B cell (primary cell): ENCODE measurements at regions of chr16 and their contacts with region 1.

Region 1: DNA sequence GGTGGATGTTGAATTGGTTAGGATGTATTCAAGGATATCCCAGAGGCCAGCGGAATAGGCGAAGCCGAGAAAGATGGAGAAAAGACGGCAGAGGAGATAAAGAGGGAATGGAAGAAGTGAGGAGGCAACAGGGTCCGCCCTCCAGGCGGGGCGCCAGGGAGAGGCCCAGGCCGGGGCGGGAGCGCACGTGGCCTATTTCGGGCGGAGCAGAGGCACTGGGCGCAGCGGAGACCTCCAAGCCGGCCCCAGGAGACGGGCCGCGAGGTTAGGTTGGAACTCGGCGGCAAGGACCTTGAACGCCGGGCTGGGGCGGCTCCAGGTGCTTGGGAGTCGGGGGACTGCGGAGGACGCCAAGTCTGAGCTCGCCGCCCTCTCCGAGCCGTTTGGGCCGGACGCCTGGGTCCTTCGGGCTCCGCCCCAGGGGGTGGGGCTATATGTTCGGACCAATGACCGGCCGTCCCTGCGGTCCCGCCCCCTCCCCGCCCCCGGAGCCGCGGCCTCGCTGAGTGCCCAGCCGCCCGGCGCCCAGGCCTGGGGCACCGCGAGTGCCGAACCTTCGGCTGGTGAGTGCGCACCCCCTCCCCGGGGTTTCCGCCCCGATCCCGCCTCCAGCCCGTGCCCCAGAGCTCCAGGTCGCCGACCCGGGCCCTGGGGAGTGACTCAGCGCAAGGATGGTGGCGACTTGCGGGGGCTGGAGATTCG is at the start of gene ZNF771:
- DNase-seq: peak; percentile 94
- ATAC-seq: peak; percentile 91
- H3K4me3 ChIP-seq: peak within 1 kb of the TSS; percentile 42 to 76 (median 66)
- H3K4me3 Mint-ChIP-seq: peak within 1 kb of the TSS; percentile 98
- H3K27ac ChIP-seq: peak within 1 kb of the TSS; percentile 42 to 57
- H3K27ac Mint-ChIP-seq: peak within 1 kb of the TSS; percentile 96
- H3K4me1 ChIP-seq: peaks cover 15 to 23% of the 10 kb centered on the region in 2 donors
- H3K4me1 Mint-ChIP-seq: peaks cover 21% of the 10 kb centered on the region
- H3K27me3 ChIP-seq: no peaks in the 10 kb centered on the region
- H3K27me3 Mint-ChIP-seq: peaks cover 3% of the 10 kb centered on the region
- CTCF ChIP-seq: no peak
- total RNA-seq, gene ZNF771: 6.6 and 8.3 TPM in 2 replicates

Region 2: DNA sequence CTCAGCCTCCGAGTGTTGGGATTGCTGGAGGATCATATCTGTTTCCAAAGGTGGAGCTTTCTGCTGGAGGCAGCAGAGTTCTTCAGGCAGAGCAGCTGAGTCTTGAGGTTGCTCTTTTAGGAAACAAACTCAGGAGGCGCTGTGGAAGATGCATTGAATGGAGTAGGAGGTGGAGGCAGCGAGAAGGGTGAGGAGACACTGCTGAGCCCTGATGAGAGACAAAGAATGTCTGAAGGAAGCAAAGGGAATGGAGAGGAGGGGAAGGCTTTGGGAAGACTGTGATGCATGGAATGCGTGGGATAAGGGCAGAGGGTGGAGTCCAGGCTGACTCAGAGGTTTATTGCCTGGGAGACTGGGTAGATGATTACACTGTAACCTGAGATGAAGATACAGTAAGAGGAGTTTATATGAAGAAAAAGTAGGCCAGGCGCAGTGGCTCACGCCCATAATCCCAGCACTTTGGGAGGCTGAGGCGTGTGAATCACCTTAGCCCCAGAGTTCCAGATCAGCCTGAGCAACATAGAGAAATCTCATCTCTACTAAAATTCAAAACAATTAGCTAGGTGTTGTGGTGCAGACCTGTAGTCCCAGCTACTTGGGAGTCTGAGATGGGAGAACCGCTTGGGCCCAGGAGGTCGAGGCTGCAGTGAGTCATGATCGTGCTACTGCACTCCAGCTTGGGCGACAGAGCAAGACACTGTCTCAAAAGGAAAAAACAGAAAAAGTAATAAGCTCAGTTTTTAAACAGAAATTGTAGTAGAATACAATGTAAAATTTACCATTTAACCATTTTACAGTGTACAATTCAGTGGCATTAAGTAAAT is 463.2 kb before region 1 on chr16:
- CTCF ChIA-PET with region 1: no interaction called
- POLR2A ChIA-PET with region 1: no interaction called
- intact Hi-C with region 1: no loop called
- DNase-seq: no peak
- ATAC-seq: no peak
- H3K4me3 ChIP-seq: no peak overlapping the region
- H3K4me3 Mint-ChIP-seq: no peak overlapping the region
- H3K27ac ChIP-seq: no peak overlapping the region
- H3K27ac Mint-ChIP-seq: no peak overlapping the region
- H3K4me1 ChIP-seq: no peaks in the 10 kb centered on the region
- H3K4me1 Mint-ChIP-seq: no peaks in the 10 kb centered on the region
- H3K27me3 ChIP-seq: peaks cover 0 to 18% (median 6%) of the 10 kb centered on the region in 4 experiments
- H3K27me3 Mint-ChIP-seq: peaks cover 15% of the 10 kb centered on the region
- CTCF ChIP-seq: no peak

Region 3: GRCh38 chr16:30335598-30336474 is 71.4 kb before region 1 on chr16:
- CTCF ChIA-PET with region 1: no interaction called
- POLR2A ChIA-PET with region 1: interaction called, 4 read pairs
- intact Hi-C with region 1: loop called (anchors 1 kb)
- DNase-seq: peak; percentile 80
- ATAC-seq: no peak
- H3K4me3 ChIP-seq: peak overlapping the region in 4 of 5 experiments; percentile 62 to 73 (median 68)
- H3K4me3 Mint-ChIP-seq: peak overlapping the region; percentile 85
- H3K27ac ChIP-seq: peak overlapping the region; percentile 59 to 76
- H3K27ac Mint-ChIP-seq: peak overlapping the region; percentile 91
- H3K4me1 ChIP-seq: peaks cover 16 to 23% of the 10 kb centered on the region in 2 donors
- H3K4me1 Mint-ChIP-seq: peaks cover 28% of the 10 kb centered on the region
- H3K27me3 ChIP-seq: no peaks in the 10 kb centered on the region
- H3K27me3 Mint-ChIP-seq: no peaks in the 10 kb centered on the region
- CTCF ChIP-seq: no peak

Region 4: DNA sequence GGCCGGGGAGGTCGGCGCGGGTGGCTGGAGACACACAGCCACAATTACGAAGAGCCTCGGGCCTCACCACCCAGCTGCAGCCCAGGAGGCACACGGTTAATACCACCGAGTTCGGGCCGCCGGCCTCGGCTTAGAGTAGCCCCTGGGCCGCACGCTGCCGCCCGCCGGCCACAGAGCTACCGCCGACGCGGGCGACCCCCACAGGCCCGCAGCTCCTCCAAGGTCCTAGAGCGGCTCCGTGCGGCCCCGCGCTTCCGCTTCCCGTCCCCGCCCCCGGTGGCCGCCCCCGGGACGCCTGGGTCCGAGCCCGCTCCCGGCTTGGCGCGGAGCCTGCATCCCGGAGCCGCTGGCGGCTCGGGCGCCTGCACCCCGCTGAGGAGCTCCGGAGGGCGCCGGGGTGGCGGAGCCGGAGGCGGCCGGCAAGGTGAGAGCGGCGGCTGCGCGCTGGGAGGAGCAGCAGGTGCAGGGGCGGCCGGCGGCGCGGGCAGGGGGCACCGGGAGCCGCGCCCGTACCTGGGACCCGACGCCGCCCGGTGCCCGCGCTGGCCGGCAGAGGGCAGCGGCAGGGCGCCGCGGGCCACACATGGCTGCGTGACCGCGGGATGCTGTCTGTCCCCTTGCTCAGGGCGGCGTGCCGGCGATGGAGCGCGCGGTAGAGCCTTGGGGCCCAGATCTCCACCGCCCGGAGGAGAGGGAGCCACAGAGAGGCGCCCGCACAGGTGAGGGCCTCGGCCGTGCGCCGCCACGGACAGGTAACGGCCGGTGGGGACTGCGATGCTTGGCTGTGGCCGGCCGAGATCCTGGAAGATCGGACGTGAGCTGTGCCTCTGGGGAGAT is 11.9 kb before region 1 on chr16 and contains the start of gene ZNF48:
- CTCF ChIA-PET with region 1: interaction called, 65 read pairs
- POLR2A ChIA-PET with region 1: interaction called, 9 read pairs
- intact Hi-C with region 1: loop called (anchors 2 kb)
- DNase-seq: peak; percentile 87
- ATAC-seq: peak; percentile 95
- H3K4me3 ChIP-seq: peak within 1 kb of the TSS; percentile 32 to 75 (median 66)
- H3K4me3 Mint-ChIP-seq: peak within 1 kb of the TSS; percentile 92
- H3K27ac ChIP-seq: peak within 1 kb of the TSS in 1 of 2 donors; percentile 64
- H3K27ac Mint-ChIP-seq: peak within 1 kb of the TSS; percentile 91
- H3K4me1 ChIP-seq: peaks cover 13 to 31% of the 10 kb centered on the region in 2 donors
- H3K4me1 Mint-ChIP-seq: peaks cover 23% of the 10 kb centered on the region
- H3K27me3 ChIP-seq: no peaks in the 10 kb centered on the region
- H3K27me3 Mint-ChIP-seq: no peaks in the 10 kb centered on the region
- CTCF ChIP-seq: peak; percentile 26
- total RNA-seq, gene ZNF48: 13.3 and 14.2 TPM in 2 replicates

Region 5: GRCh38 chr16:30934827-30935557 is 527.7 kb after region 1 on chr16:
- CTCF ChIA-PET with region 1: no interaction called
- POLR2A ChIA-PET with region 1: no interaction called
- intact Hi-C with region 1: no loop called
- DNase-seq: peak; percentile 45
- ATAC-seq: peak; percentile 53
- H3K4me3 ChIP-seq: no peak overlapping the region
- H3K4me3 Mint-ChIP-seq: no peak overlapping the region
- H3K27ac ChIP-seq: no peak overlapping the region
- H3K27ac Mint-ChIP-seq: no peak overlapping the region
- H3K4me1 ChIP-seq: peaks cover 6 to 8% of the 10 kb centered on the region in 2 donors
- H3K4me1 Mint-ChIP-seq: peaks cover 6% of the 10 kb centered on the region
- H3K27me3 ChIP-seq: no peaks in the 10 kb centered on the region
- H3K27me3 Mint-ChIP-seq: no peaks in the 10 kb centered on the region
- CTCF ChIP-seq: peak; percentile 60